ENCODE measurements at regions of chr17 and their contacts with region 1.

Region 1: GRCh38 chr17:47831003-47831933 is at the starts of genes LRRC46 and MRPL10:
- DNase-seq: peak; percentile 78 to 94
- H3K4me3 ChIP-seq: peak within 1 kb of the TSS; percentile 86 to 99 (median 98)
- H3K27ac ChIP-seq: peak within 1 kb of the TSS; percentile 50
- H3K4me1 ChIP-seq: peaks cover 0 to 6% (median 2%) of the 10 kb centered on the region in 4 experiments; a peak in 4 of 7 replicates
- H3K27me3 ChIP-seq: no peaks in the 10 kb centered on the region
- CTCF ChIP-seq: peak in 1 of 3 experiments; percentile 26; a peak in 1 of 4 replicates
- EP300 ChIP-seq: no peak
- POLR2A ChIP-seq: peak; percentile 62 to 96
- RAD21 ChIP-seq: no peak
- total RNA-seq, gene LRRC46: 0.36 TPM in 1 of 2 replicates, not detected in the other
- total RNA-seq, gene MRPL10: 83.0 and 85.3 TPM in 2 replicates

Region 2: DNA sequence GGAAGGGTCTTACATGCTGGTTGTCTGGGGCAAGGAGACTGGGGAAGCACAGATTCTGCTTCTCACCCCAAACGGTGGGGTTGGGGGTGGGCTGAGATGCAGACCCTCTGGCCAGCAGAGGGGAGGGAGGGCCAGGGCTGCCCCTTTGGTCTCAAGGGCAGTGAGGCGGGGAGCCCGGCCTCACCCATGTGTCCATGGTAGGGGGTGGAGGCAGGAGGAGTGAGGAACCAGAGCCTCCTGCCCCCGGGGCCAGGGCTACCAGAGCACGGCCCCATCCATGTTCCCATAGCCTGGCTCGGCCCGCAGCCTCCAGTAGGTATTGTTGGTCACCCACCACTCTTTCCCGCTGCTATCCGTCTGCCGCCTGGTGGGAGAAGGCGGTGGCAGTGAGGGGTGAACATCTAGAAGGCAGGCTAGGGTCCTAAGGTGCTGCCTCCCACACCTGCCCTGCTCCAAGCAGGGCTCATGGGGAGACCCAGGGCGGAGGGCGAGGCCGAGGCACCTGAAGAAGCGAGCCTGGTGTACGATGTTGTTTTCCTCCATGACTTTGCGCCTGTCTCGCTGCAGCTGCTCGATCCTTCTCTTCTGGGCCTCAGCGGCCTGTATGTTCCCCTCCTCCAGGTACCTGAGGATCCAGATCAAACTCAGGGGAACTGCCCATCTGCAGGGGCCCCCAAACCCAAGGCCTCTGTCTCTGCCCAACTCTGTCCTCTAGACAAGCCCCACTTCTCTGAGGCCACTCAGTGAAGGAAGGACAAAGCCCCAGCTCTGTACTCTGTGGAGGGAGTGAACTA is 23.0 kb before region 1 on chr17:
- CTCF ChIA-PET with region 1: no interaction called
- POLR2A ChIA-PET with region 1: no interaction called
- DNase-seq: no peak
- H3K4me3 ChIP-seq: no peak overlapping the region
- H3K27ac ChIP-seq: no peak overlapping the region
- H3K4me1 ChIP-seq: no peaks in the 10 kb centered on the region; a peak in 1 of 7 replicates
- H3K27me3 ChIP-seq: no peaks in the 10 kb centered on the region
- CTCF ChIP-seq: no peak
- EP300 ChIP-seq: no peak
- POLR2A ChIP-seq: no peak
- RAD21 ChIP-seq: no peak

Region 3: GRCh38 chr17:47850692-47851573 is 19.7 kb after region 1 on chr17 and contains the start of gene SP6:
- CTCF ChIA-PET with region 1: interaction called, 373 read pairs
- POLR2A ChIA-PET with region 1: interaction called, 7 read pairs
- DNase-seq: peak in 1 of 2 experiments; percentile 91
- H3K4me3 ChIP-seq: peak within 1 kb of the TSS; percentile 39 to 67 (median 63)
- H3K27ac ChIP-seq: no peak within 1 kb of the TSS
- H3K4me1 ChIP-seq: peaks cover 4 to 26% (median 15%) of the 10 kb centered on the region in 4 experiments
- H3K27me3 ChIP-seq: peaks cover 63 to 92% (median 86%) of the 10 kb centered on the region in 4 experiments
- CTCF ChIP-seq: peak in 1 of 3 experiments; percentile 28; a peak in 2 of 4 replicates
- EP300 ChIP-seq: no peak
- POLR2A ChIP-seq: peak in 1 of 2 experiments; percentile 70; a peak in 2 of 3 replicates
- RAD21 ChIP-seq: no peak
- total RNA-seq, gene SP6: 1.5 and 1.6 TPM in 2 replicates

Region 4: DNA sequence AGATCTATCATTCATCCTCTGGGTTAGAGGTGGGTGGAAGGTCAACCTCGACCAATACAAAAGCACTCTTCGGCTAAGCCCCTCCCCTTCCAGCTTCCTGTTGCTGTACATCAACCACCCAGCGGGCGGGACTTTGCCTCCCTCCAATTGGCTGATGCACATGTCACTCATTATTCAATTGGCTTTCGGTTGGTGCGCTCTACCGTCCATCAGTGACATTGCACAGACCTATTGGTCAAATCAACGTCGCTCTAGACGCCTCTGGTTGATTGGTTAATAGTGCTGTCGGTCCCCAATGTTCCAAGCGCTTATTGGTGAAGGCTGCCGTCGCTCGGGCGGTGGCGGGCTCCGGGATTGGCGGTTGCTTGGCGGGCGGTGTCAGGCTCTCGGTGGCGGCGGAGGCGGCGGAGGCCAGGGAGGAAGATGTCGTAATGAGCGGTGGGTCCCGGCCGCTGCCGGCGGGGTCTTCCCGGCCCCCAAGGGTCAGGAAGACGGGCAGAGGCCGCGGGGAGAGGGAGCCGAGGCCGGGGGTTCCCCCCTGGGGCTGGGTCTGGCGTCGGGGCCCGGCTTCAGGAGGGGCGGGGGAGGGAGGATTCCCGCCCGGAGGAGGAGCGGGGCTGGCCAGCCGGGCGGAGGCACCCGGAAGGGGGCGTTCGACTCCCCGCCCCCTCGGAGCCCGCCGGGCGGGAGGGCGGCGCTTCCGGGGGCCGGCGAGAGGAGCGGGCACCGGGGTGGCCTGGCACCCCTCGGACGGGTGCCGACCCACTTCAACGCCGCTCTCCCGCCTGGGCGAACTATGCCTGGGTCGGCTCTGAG is 64.8 kb after region 1 on chr17 and contains the start of gene SP2:
- CTCF ChIA-PET with region 1: interaction called, 1,206 read pairs
- POLR2A ChIA-PET with region 1: interaction called, 10 read pairs
- DNase-seq: peak; percentile 100
- H3K4me3 ChIP-seq: peak within 1 kb of the TSS; percentile 85 to 99 (median 93)
- H3K27ac ChIP-seq: peak within 1 kb of the TSS; percentile 83
- H3K4me1 ChIP-seq: peaks cover 0 to 9% (median 4%) of the 10 kb centered on the region in 4 experiments; a peak in 6 of 7 replicates
- H3K27me3 ChIP-seq: no peaks in the 10 kb centered on the region; a peak in 1 of 7 replicates
- CTCF ChIP-seq: no peak; a peak in 1 of 4 replicates
- EP300 ChIP-seq: no peak
- POLR2A ChIP-seq: peak; percentile 53 to 75
- RAD21 ChIP-seq: no peak
- total RNA-seq, gene SP2: 11.0 and 13.8 TPM in 2 replicates

Region 5: GRCh38 chr17:47924785-47925676 is 93.8 kb after region 1 on chr17:
- CTCF ChIA-PET with region 1: no interaction called
- POLR2A ChIA-PET with region 1: no interaction called
- DNase-seq: no peak
- H3K4me3 ChIP-seq: no peak overlapping the region
- H3K27ac ChIP-seq: no peak overlapping the region
- H3K4me1 ChIP-seq: no peaks in the 10 kb centered on the region
- H3K27me3 ChIP-seq: no peaks in the 10 kb centered on the region
- CTCF ChIP-seq: no peak
- EP300 ChIP-seq: no peak
- POLR2A ChIP-seq: no peak
- RAD21 ChIP-seq: no peak